Mammary epithelial cell (primary cell): ENCODE measurements at regions of chr13 and their contacts with region 1.

Region 1: DNA sequence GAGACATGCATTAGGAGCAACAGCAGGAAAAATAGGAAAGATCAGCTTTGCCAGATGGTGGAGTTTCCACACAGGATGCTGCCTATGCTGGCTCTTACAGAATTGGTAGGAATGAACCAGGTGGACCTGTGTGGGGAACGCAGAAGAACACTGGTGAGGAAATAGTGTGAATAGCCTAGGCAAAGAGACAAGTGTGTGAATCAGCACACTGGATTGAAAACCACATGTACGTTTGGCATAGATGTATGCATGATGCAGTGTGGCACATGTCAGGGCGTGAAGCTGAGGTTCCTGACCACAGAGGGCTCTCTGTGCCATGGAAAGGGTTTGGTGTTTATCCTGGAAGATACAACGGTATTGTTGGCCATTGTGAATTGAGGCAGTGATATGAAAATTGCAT is 156.5 kb upstream of the SLC10A2 start:
- DNase-seq: peak; percentile 97
- H3K4me3 ChIP-seq: no peak overlapping the region
- H3K27ac ChIP-seq: peak overlapping the region; percentile 90
- H3K4me1 ChIP-seq: peaks cover 32% of the 10 kb centered on the region
- H3K27me3 ChIP-seq: no peaks in the 10 kb centered on the region
- CTCF ChIP-seq: no peak

Region 2: GRCh38 chr13:103140001-103140671 is 82.5 kb before region 1 on chr13:
- CTCF ChIA-PET with region 1: no interaction called
- dilution Hi-C with region 1: no loop called
- in situ Hi-C with region 1: no loop called
- intact Hi-C with region 1: no loop called
- DNase-seq: peak; percentile 33
- H3K4me3 ChIP-seq: no peak overlapping the region
- H3K27ac ChIP-seq: no peak overlapping the region
- H3K4me1 ChIP-seq: no peaks in the 10 kb centered on the region
- H3K27me3 ChIP-seq: no peaks in the 10 kb centered on the region
- CTCF ChIP-seq: peak; percentile 80 to 84

Region 3: DNA sequence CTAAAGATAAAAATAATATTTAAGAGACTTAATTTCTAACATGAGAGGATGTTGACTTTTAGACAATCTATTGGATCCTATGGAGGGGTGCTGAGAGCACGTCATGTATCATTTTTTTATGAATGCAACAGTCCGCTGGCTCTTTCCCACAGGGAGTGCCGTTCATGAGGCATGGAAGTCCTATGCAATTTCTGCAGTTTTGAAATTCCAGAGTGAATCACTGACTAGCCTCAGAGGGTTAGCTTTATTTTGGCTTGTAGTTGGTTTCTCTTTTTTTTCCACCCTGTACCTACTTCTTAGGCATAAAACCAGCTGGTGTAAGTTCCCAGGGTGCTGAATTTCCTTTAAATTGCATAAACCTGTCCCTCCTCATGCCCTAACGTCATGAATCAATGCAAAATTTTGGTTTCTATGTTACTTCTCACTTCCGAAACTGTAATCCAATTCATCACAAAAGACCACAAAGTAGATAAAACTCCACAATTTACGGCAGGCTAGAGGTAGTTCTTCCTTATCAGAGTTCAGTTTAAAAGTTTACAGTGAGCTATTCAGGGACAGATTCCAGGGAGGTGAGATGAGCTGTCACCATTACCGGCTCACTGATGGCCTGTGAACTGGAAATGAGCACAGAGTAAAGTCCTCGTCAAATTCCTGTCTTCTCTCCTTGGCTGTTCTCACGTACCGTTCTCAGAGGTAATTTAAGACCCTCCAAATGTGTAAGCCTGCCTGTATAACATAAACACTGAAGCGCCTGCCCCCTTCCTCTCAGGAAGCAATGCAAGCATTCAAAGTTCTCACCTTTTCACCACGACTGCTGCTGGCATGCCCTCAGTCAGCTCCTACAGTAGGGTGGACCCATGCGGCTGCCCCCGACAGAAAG is 60.1 kb after region 1 on chr13:
- CTCF ChIA-PET with region 1: no interaction called
- dilution Hi-C with region 1: no loop called
- in situ Hi-C with region 1: no loop called
- intact Hi-C with region 1: loop called (anchors 2 kb)
- DNase-seq: peak; percentile 97
- H3K4me3 ChIP-seq: no peak overlapping the region
- H3K27ac ChIP-seq: peak overlapping the region; percentile 96
- H3K4me1 ChIP-seq: peaks cover 19% of the 10 kb centered on the region
- H3K27me3 ChIP-seq: no peaks in the 10 kb centered on the region
- CTCF ChIP-seq: peak in 1 of 2 donors; percentile 14